CD8-positive, alpha-beta T cell (primary cell): ENCODE measurements at regions of chr2 and their contacts with region 1.

Region 1: GRCh38 chr2:196068271-196069209 is at the start of gene DNAH7:
- DNase-seq: peak; percentile 79 to 97 (median 92)
- ATAC-seq: peak; percentile 94
- H3K4me3 ChIP-seq: peak within 1 kb of the TSS; percentile 62
- H3K4me3 Mint-ChIP-seq: peak within 1 kb of the TSS; percentile 83
- H3K27ac ChIP-seq: peak within 1 kb of the TSS; percentile 41 to 60
- H3K27ac Mint-ChIP-seq: peak within 1 kb of the TSS; percentile 81
- H3K4me1 ChIP-seq: peaks cover 9% of the 10 kb centered on the region
- H3K4me1 Mint-ChIP-seq: peaks cover 20% of the 10 kb centered on the region
- H3K27me3 ChIP-seq: no peaks in the 10 kb centered on the region
- H3K27me3 Mint-ChIP-seq: peaks cover under 1% of the 10 kb centered on the region
- CTCF ChIP-seq: peak; percentile 47
- total RNA-seq, gene DNAH7: not detected

Region 2: DNA sequence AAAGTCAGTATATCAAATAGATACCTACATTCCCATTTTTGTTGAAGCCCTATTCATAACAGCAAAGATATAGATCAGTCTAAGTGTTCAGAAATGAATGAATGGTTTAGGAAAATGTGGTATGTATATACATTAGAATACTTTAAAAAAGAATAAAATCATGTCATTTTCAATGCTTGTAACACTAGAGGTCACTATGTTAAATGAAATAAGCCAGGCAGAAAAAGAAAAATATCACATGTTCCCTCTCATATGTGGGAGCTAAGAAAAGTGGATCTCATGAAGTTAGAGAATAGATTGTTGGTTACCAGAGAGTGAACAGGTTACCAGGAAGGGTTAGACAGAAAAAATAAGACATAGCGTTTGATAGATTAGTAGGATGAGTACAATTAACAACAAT is 1522.6 kb before region 1 on chr2:
- CTCF ChIA-PET with region 1: interaction called, 3 read pairs
- POLR2A ChIA-PET with region 1: no interaction called
- intact Hi-C with region 1: loop called (anchors 5 to 10 kb)
- DNase-seq: no peak
- ATAC-seq: no peak
- H3K4me3 ChIP-seq: no peak overlapping the region
- H3K4me3 Mint-ChIP-seq: no peak overlapping the region
- H3K27ac ChIP-seq: no peak overlapping the region
- H3K27ac Mint-ChIP-seq: no peak overlapping the region
- H3K4me1 ChIP-seq: no peaks in the 10 kb centered on the region
- H3K4me1 Mint-ChIP-seq: no peaks in the 10 kb centered on the region
- H3K27me3 ChIP-seq: no peaks in the 10 kb centered on the region
- H3K27me3 Mint-ChIP-seq: no peaks in the 10 kb centered on the region
- CTCF ChIP-seq: no peak

Region 3: GRCh38 chr2:195407782-195408181 is 660.8 kb before region 1 on chr2:
- CTCF ChIA-PET with region 1: interaction called, 5 read pairs
- POLR2A ChIA-PET with region 1: no interaction called
- intact Hi-C with region 1: loop called (anchors 1 to 10 kb)
- DNase-seq: no peak
- ATAC-seq: no peak
- H3K4me3 ChIP-seq: no peak overlapping the region
- H3K4me3 Mint-ChIP-seq: no peak overlapping the region
- H3K27ac ChIP-seq: no peak overlapping the region
- H3K27ac Mint-ChIP-seq: no peak overlapping the region
- H3K4me1 ChIP-seq: no peaks in the 10 kb centered on the region
- H3K4me1 Mint-ChIP-seq: peaks cover 3% of the 10 kb centered on the region
- H3K27me3 ChIP-seq: no peaks in the 10 kb centered on the region
- H3K27me3 Mint-ChIP-seq: no peaks in the 10 kb centered on the region
- CTCF ChIP-seq: no peak

Region 4: GRCh38 chr2:195533771-195534642 is 534.5 kb before region 1 on chr2:
- CTCF ChIA-PET with region 1: interaction called, 5 read pairs
- POLR2A ChIA-PET with region 1: no interaction called
- intact Hi-C with region 1: loop called in 1 of 2 experiments (anchors 10 kb)
- DNase-seq: peak; percentile 7 to 70 (median 60)
- ATAC-seq: peak; percentile 63
- H3K4me3 ChIP-seq: peak overlapping the region; percentile 11 to 53
- H3K4me3 Mint-ChIP-seq: peak overlapping the region; percentile 79
- H3K27ac ChIP-seq: peak overlapping the region; percentile 52 to 66
- H3K27ac Mint-ChIP-seq: peak overlapping the region; percentile 98
- H3K4me1 ChIP-seq: peaks cover 79% of the 10 kb centered on the region
- H3K4me1 Mint-ChIP-seq: peaks cover 81% of the 10 kb centered on the region
- H3K27me3 ChIP-seq: no peaks in the 10 kb centered on the region
- H3K27me3 Mint-ChIP-seq: no peaks in the 10 kb centered on the region
- CTCF ChIP-seq: no peak

Region 5: DNA sequence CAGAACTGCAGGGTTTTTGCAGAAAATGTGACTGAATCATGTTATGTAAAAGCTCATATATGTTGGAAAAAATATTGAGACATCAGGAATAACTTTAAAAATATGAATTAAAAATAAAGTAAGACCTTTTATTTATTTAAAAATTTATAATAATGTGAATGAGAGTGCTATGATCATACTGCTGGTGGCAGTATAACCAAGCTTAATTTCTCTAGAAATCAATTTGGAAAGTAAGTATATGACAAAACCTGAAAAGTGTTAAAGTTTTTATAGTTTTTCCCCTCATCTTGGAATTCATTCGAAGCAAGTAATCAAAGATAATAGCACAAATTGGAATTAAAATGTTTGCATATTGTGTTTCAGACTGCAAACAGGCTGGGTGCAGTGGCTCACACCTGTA is 404.0 kb before region 1 on chr2:
- CTCF ChIA-PET with region 1: interaction called, 23 read pairs
- POLR2A ChIA-PET with region 1: no interaction called
- intact Hi-C with region 1: loop called (anchors 2 kb)
- DNase-seq: no peak
- ATAC-seq: no peak
- H3K4me3 ChIP-seq: no peak overlapping the region
- H3K4me3 Mint-ChIP-seq: no peak overlapping the region
- H3K27ac ChIP-seq: no peak overlapping the region
- H3K27ac Mint-ChIP-seq: peak overlapping the region; percentile 77
- H3K4me1 ChIP-seq: peaks cover 56% of the 10 kb centered on the region
- H3K4me1 Mint-ChIP-seq: peaks cover 74% of the 10 kb centered on the region
- H3K27me3 ChIP-seq: no peaks in the 10 kb centered on the region
- H3K27me3 Mint-ChIP-seq: no peaks in the 10 kb centered on the region
- CTCF ChIP-seq: peak; percentile 59

Region 6: DNA sequence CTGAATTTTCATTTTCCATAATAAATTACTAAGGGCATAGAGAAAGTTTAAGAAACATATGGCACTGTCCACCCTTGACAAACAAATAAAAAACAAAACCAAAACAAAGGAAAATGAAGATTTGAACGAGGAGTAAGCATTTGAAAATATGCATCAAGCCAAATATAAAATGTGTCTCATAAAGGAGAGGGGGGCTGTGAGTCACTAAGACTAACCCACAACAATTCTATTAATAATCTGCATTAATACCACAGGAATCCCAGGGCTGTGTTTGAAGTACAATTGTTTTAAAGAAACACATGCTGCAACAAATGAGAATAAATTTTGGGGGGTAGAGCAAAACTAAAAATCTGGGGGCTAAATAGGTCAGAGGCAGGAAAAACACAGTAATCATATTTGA is 156.7 kb after region 1 on chr2:
- CTCF ChIA-PET with region 1: interaction called, 127 read pairs
- POLR2A ChIA-PET with region 1: no interaction called
- intact Hi-C with region 1: no loop called
- DNase-seq: no peak
- ATAC-seq: no peak
- H3K4me3 ChIP-seq: no peak overlapping the region
- H3K4me3 Mint-ChIP-seq: peak overlapping the region; percentile 8
- H3K27ac ChIP-seq: no peak overlapping the region
- H3K27ac Mint-ChIP-seq: peak overlapping the region; percentile 25
- H3K4me1 ChIP-seq: peaks cover 61% of the 10 kb centered on the region
- H3K4me1 Mint-ChIP-seq: peaks cover 78% of the 10 kb centered on the region
- H3K27me3 ChIP-seq: no peaks in the 10 kb centered on the region
- H3K27me3 Mint-ChIP-seq: no peaks in the 10 kb centered on the region
- CTCF ChIP-seq: no peak

Region 7: DNA sequence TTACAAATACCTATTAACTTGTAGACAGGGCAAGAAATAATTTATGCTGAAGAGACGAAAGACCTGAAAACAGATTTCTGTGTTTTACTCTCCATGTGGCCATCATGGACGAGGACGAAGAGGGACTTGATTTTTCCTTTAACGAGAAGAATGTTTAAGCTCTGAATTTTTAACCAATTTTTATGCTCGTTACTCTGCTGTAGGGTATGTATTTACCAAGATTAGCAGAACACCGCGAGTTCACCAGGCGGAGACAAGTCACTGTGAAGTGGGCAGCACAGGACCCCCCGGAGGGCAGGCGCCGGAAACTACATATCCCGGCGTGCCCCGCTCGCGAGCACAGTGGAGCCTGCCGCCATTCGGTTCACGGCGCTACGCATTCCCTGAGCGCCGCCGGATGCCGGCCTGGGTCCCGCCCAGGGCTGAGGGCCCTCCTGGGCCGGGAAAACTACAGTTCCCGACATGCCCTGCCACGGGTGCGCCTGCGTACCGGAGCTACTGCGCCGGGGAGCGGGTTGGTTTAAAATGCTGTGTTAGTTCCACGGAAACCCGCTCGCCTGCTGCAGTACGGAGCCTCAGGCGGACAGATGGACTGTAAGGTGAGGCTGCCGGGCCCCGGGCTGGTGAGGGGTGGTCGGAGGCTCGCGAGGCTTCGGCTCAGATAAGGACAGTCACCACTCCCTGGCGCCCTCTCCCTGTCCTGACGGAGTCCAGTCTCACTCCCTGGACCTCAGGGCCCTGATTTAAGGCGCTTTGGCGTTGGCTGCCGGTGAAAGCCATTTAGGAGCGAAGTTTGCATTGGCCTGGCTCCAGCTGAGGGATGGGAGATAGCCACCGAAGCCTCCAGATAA is 570.9 kb after region 1 on chr2 and contains the start of gene CCDC150:
- CTCF ChIA-PET with region 1: no interaction called
- POLR2A ChIA-PET with region 1: no interaction called
- intact Hi-C with region 1: loop called (anchors 1 to 5 kb)
- DNase-seq: peak; percentile 89 to 96 (median 94)
- ATAC-seq: peak; percentile 100
- H3K4me3 ChIP-seq: peak within 1 kb of the TSS; percentile 68 to 85
- H3K4me3 Mint-ChIP-seq: peak within 1 kb of the TSS; percentile 86
- H3K27ac ChIP-seq: peak within 1 kb of the TSS; percentile 12 to 27
- H3K27ac Mint-ChIP-seq: peak within 1 kb of the TSS; percentile 38
- H3K4me1 ChIP-seq: peaks cover 7% of the 10 kb centered on the region
- H3K4me1 Mint-ChIP-seq: peaks cover 13% of the 10 kb centered on the region
- H3K27me3 ChIP-seq: no peaks in the 10 kb centered on the region
- H3K27me3 Mint-ChIP-seq: no peaks in the 10 kb centered on the region
- CTCF ChIP-seq: no peak
- total RNA-seq, gene CCDC150: 0.72 to 0.81 TPM

Region 8: DNA sequence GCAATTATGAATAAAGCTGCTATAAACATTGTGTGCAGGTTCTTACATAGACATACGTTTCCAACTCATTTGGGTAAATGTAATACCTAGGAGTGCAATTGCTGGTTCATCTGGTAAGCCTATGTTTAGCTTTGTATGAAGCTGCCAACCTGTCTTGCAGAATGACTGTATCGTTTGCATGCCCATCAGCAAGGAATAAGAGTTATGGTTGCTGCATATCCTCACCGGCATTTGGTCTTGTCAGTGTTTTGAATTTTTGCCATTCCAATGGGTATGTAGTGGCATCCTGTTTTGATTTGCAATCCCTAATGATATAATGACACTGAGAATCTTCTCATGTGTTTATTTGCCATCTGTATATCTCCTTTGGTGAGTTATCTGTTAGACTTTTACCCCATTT is 591.7 kb after region 1 on chr2:
- CTCF ChIA-PET with region 1: no interaction called
- POLR2A ChIA-PET with region 1: no interaction called
- intact Hi-C with region 1: no loop called
- DNase-seq: no peak
- ATAC-seq: no peak
- H3K4me3 ChIP-seq: no peak overlapping the region
- H3K4me3 Mint-ChIP-seq: no peak overlapping the region
- H3K27ac ChIP-seq: no peak overlapping the region
- H3K27ac Mint-ChIP-seq: no peak overlapping the region
- H3K4me1 ChIP-seq: no peaks in the 10 kb centered on the region
- H3K4me1 Mint-ChIP-seq: no peaks in the 10 kb centered on the region
- H3K27me3 ChIP-seq: no peaks in the 10 kb centered on the region
- H3K27me3 Mint-ChIP-seq: peaks cover 2% of the 10 kb centered on the region
- CTCF ChIP-seq: no peak